Astrocyte of the cerebellum (primary cell): ENCODE measurements at regions of chr6 and their contacts with region 1.

Region 1: GRCh38 chr6:140956571-140957369 is 1176.0 kb upstream of the GJE1 start:
- DNase-seq: no peak
- H3K4me3 ChIP-seq: no peak overlapping the region
- CTCF ChIP-seq: no peak

Region 2: DNA sequence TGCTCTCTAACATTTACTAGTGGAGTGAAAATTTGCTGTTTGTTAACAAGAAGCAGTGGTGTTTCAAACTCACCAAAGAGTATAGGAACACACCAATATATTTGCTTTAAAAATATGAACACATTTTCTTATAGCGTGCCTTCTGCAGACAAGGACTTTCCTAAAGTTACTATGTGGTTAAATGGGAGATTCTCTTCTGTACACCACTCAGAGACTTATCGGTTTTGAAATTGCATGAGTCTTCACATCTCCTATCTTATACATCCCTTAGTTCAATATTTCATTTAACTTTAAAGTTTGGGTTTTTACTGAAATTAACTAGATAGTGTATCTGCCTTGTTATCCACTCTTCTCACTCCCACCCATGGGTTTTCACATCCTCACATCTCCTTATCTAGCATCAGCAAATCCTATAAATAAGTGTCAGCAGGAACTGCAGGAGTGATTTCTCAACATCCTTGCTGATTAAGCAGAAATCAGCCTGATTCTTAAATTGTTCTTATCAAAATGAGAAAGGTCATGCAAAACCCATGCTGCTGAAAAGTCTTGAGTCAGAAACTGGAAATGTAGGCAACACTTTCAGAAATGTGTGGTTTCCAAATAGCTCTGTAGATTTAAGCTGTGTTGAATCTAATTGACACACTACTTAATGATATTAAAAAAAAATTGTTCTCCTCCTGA is 100.3 kb after region 1 on chr6:
- in situ Hi-C with region 1: loop called (anchors 10 kb)
- DNase-seq: no peak
- H3K4me3 ChIP-seq: no peak overlapping the region
- CTCF ChIP-seq: no peak